ENCODE measurements at regions of chr16 and their contacts with region 1.

Region 1: DNA sequence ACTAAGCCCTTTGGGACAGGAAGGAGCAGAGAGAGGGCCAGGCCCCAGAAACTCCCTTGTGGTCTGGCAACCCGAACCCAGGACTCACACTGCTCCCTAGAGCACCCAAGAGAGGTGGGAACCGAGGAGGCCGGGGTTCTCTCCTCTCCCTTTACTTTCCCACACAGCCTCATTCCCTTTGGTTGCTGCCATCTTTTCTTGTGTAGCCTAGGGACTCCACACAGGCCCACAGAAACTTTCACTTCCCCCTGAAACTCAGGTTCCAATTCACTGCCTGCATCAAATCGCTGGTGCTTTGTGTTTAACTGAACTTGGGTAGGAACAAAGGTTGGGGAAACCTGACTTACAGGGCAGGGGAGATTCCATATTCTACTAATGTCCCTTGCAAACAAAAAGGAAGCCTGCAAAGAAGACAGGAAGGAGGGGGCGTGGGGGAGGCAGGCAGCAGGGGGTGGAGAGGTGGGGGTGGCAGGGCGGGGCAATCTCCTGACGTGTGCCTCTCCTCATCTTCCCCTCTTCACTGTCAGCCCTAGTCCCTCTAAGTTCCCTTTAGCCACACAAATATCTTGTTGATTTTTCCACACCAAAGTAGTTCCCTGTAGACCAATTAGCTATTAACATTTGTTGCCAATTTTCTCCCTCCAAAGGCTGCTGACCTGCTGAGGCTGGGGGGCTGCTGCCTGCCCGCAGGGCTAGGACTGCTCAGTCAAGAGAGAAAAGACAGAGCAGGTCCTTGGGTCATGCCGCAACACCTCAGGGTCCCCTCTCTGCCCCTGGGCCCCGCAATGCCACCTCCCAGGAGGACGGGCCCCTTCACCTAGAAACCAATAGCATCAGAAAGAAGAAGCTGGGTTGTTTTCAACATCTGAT is 8.0 kb downstream of the ST3GAL2 start:
- DNase-seq: peak; percentile 57
- ATAC-seq: peak; percentile 69
- H3K4me3 Mint-ChIP-seq: peak overlapping the region; percentile 75
- H3K27ac Mint-ChIP-seq: peak overlapping the region; percentile 97
- H3K4me1 Mint-ChIP-seq: peaks cover 83% of the 10 kb centered on the region
- H3K27me3 Mint-ChIP-seq: no peaks in the 10 kb centered on the region
- CTCF ChIP-seq: no peak

Region 2: DNA sequence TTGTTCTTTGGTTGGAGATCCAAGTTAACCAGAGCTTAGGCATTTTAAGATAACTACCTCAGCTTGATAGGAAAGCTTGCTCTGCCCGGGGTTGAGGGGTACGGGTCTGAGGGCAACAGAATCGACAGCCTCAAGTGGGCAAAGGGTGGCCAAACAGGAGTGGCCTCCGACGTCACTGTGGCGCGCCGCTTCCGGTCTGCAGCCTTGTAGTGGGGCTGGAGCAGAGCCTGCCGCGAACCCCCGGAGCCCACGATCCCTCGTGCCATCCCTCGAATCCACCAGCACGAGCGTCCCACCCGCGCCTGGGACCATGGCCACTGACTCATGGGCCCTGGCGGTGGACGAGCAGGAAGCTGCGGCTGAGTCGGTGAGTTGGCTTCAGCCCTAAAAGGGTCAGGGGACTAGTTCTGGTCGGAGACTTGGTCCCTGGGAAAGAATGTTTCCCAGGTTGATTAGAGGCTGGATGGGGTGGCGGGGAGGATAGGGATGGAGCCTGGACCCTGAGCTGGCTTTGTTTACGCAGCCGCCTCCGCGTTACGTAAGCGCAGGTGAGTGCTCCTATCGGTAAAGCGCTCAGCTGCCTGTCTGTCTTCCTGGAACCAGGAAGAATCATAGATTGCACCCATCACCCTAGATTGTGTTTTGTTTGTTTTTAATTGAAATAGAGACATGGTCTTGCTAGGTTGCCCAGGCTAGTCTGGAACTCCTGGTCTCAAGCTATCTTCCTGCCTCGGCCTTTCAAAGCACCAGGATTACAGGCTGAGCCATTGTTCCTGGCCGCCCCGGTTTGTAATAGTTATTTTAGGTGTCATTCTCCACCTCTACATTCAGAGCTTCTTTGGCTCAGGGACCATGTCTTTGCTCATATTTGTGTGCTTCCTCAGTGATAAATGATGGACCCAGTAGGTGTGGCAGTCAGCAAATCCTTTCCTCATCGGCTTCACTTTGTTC is 131.6 kb before region 1 on chr16 and contains the start of gene DDX19B:
- CTCF ChIA-PET with region 1: no interaction called
- POLR2A ChIA-PET with region 1: interaction called, 11 read pairs
- intact Hi-C with region 1: no loop called
- DNase-seq: peak; percentile 59
- ATAC-seq: peak; percentile 91
- H3K4me3 Mint-ChIP-seq: peak within 1 kb of the TSS; percentile 95
- H3K27ac Mint-ChIP-seq: peak within 1 kb of the TSS; percentile 95
- H3K4me1 Mint-ChIP-seq: peaks cover 33% of the 10 kb centered on the region
- H3K27me3 Mint-ChIP-seq: no peaks in the 10 kb centered on the region
- CTCF ChIP-seq: no peak
- total RNA-seq, gene DDX19B: 33.7 and 42.2 TPM in 2 replicates

Region 3: DNA sequence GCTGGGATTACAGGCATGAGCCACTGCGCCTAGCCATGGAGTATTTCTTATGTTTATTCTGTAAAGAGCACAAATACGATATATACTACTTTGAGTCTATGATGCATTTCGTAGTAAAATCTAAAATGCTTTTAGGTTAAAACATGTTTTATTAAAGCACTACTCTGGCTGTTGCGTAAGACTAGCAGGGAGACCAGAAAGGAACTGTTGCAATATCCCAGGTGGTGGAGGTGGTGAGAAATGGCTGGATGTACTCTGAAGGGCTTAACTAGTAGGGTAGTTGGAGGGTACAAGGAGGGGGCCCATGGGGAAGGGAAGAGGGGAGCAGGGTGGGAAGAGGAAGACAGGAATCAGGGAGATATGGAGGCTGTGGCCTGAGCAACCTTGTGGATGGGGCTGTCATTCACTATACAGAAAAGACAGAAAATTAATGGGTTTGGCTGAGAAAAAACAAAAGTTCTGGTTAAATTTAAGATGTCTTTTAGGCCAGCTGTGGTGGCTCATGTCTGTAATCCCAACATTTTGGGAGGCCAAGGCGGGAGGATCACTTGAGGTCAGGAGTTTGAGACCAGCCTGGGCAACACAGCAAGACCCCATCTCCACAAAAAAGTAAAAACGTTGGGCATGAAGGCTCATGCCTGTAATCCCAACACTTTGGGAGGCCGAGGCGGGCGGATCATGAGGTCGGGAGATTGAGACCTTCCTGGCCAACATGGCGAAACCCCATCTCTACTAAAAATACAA is 27.8 kb before region 1 on chr16:
- CTCF ChIA-PET with region 1: interaction called, 5 read pairs
- POLR2A ChIA-PET with region 1: interaction called, 16 read pairs
- intact Hi-C with region 1: loop called (anchors 1 kb)
- DNase-seq: no peak
- ATAC-seq: no peak
- H3K4me3 Mint-ChIP-seq: no peak overlapping the region
- H3K27ac Mint-ChIP-seq: no peak overlapping the region
- H3K4me1 Mint-ChIP-seq: peaks cover 53% of the 10 kb centered on the region
- H3K27me3 Mint-ChIP-seq: peaks cover 6% of the 10 kb centered on the region
- CTCF ChIP-seq: no peak

Region 4: DNA sequence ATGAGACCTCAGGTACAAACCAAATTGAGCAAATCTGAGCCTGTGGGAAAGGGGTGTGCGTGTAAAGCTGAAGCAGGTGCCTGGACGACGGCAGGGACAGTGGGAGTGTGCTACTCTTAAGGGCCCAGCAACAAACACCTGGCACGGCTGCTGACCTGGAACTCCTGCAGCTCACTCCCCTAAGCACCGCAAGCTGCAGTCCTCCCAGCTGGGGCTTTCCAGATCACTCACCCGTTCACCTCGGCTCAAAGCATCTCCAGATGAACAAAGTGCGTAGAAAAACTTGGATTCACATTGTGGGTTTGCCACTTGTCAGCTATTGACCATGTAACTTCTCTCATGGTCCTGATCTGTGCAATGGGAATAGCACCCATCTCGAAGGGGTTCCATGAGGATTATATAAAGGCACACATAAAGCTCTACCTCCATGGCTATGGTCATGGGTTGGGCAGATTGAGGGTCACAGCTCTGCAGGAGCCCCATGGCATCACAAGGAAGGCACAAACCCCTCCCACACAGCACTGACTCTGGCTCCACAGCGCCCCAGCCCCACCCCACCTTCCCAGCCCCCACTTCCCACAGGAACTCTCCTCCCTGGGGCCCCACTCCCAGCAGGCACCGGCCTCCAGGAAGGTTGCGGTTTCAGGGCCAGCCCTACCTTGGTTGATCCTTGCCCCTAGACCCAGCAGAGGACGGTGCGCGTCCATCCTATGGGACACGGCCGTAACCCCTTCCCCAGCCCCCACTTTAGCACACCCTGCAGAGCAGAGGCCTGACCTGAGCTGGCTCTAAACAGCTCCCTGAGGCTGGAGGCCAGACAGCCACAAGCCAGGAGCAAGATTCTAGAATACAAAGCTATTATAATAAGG is 13.9 kb before region 1 on chr16:
- CTCF ChIA-PET with region 1: no interaction called
- POLR2A ChIA-PET with region 1: interaction called, 62 read pairs
- intact Hi-C with region 1: loop called (anchors 1 kb)
- DNase-seq: peak; percentile 49
- ATAC-seq: peak; percentile 95
- H3K4me3 Mint-ChIP-seq: peak overlapping the region; percentile 50
- H3K27ac Mint-ChIP-seq: peak overlapping the region; percentile 78
- H3K4me1 Mint-ChIP-seq: peaks cover 60% of the 10 kb centered on the region
- H3K27me3 Mint-ChIP-seq: no peaks in the 10 kb centered on the region
- CTCF ChIP-seq: no peak

Region 5: GRCh38 chr16:70470927-70471341 is 40.0 kb after region 1 on chr16:
- CTCF ChIA-PET with region 1: no interaction called
- POLR2A ChIA-PET with region 1: no interaction called
- intact Hi-C with region 1: loop called (anchors 1 kb)
- DNase-seq: no peak
- ATAC-seq: no peak
- H3K4me3 Mint-ChIP-seq: no peak overlapping the region
- H3K27ac Mint-ChIP-seq: no peak overlapping the region
- H3K4me1 Mint-ChIP-seq: no peaks in the 10 kb centered on the region
- H3K27me3 Mint-ChIP-seq: no peaks in the 10 kb centered on the region
- CTCF ChIP-seq: no peak

Region 6: GRCh38 chr16:70630960-70631745 is 200.3 kb after region 1 on chr16:
- CTCF ChIA-PET with region 1: no interaction called
- POLR2A ChIA-PET with region 1: no interaction called
- intact Hi-C with region 1: no loop called
- DNase-seq: no peak
- ATAC-seq: no peak
- H3K4me3 Mint-ChIP-seq: no peak overlapping the region
- H3K27ac Mint-ChIP-seq: no peak overlapping the region
- H3K4me1 Mint-ChIP-seq: no peaks in the 10 kb centered on the region
- H3K27me3 Mint-ChIP-seq: peaks cover 8% of the 10 kb centered on the region
- CTCF ChIP-seq: no peak

Measured in activated B cell treated with CpG ODN at 0.5 μM for 24 hours (primary cell).